ENCODE measurements at regions of chr3 and their contacts with region 1.

Region 1: GRCh38 chr3:179147873-179148615 is at the start of gene PIK3CA:
- DNase-seq: peak; percentile 96 to 97
- ATAC-seq: peak; percentile 98
- H3K4me3 ChIP-seq: peak within 1 kb of the TSS; percentile 94 to 100
- H3K27ac ChIP-seq: peak within 1 kb of the TSS; percentile 86 to 96
- H3K4me1 ChIP-seq: peaks cover 0 to 7% of the 10 kb centered on the region in 2 donors
- H3K27me3 ChIP-seq: no peaks in the 10 kb centered on the region
- total RNA-seq, gene PIK3CA: 37.6 to 39.1 TPM

Region 2: GRCh38 chr3:179015551-179016020 is 132.5 kb before region 1 on chr3:
- intact Hi-C with region 1: loop called in 1 of 2 experiments (anchors 5 kb)
- DNase-seq: no peak
- ATAC-seq: peak; percentile 92
- H3K4me3 ChIP-seq: no peak overlapping the region
- H3K27ac ChIP-seq: no peak overlapping the region
- H3K4me1 ChIP-seq: peaks cover 0 to 2% of the 10 kb centered on the region in 2 donors
- H3K27me3 ChIP-seq: no peaks in the 10 kb centered on the region

Region 3: DNA sequence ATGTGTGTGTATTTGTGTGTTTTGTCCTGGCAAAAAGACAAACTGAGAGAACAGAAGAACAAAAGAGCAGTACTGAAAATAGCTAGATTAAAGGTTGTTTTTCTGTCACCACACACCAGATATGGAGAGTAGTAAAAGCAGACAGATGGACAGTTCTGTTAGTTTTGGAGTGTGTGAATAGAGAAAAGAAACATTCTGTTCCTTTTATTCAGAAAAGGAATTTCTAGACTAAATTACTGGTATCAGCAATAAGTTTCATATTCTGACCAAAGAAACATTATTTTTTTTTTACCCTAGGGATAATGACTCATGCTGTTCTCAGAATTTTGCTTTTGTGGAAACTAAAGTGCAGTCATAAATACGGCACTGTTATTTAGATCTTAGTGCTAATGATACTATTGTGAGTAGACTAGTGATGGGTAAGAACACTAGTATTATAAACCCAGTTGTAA is 33.0 kb after region 1 on chr3:
- intact Hi-C with region 1: loop called in 1 of 2 experiments (anchors 5 kb)
- DNase-seq: no peak
- ATAC-seq: peak; percentile 90
- H3K4me3 ChIP-seq: no peak overlapping the region
- H3K27ac ChIP-seq: no peak overlapping the region
- H3K4me1 ChIP-seq: peaks cover 5 to 16% of the 10 kb centered on the region in 2 donors
- H3K27me3 ChIP-seq: no peaks in the 10 kb centered on the region

Region 4: DNA sequence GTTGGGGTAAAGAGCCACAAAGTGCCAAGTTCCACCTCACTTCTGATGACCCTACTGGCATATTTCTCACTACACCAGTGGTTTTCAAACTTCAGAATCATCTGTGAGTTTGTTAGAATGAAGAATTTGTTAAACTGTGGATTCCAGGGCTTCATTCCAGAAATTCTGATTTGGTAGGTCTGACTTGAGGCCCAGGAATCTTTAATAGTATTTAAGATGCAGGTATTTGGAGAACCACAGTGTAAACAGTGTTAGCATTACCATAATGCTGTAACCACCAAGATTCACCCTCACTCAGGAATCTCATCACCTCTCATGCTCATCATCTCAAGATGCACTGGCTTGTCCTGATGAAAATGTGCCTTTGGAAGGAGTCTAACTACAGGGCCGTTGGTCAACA is 96.8 kb after region 1 on chr3:
- intact Hi-C with region 1: no loop called
- DNase-seq: no peak
- ATAC-seq: no peak
- H3K4me3 ChIP-seq: no peak overlapping the region
- H3K27ac ChIP-seq: no peak overlapping the region
- H3K4me1 ChIP-seq: no peaks in the 10 kb centered on the region
- H3K27me3 ChIP-seq: no peaks in the 10 kb centered on the region

Region 5: DNA sequence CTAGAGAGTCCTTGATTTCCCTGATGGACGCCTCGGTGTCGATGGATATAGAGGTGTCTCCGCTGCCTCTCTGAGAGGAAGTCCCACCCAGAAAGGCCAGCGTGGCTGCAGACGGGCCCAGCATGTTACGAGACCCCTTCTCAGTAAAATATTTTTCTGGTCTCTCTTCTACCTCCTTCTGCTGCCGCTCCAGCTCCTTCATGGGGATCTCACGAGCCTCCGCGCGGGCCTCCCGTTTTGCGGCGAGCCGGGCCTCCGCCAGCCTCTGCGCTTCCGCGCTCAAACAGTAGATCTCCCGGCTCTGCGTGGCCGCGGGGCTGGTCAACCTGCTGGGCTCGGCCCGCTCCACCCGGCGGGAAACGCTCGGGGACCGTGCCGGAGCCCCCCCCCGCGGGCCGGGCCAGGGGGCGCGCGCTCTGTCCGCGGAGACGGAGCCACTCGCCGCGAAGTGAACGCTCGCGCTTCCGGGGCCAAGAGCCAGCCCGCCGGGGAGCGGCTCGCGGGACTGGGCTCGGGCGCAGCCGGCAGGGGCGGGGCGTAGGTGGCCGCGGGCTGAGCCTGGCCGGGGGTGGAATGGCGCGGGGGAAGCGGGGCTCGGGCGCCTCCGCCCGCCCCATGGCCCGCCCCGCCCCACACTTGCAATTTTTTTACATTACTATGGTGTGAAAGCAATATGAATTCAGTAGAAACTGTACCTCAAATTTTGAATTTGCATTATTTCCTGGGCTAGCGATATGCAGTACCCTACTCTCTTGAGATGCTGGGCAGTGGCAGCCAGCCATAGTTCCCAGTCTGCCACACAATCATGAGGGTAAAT is 113.1 kb after region 1 on chr3:
- intact Hi-C with region 1: loop called in 1 of 2 experiments (anchors 2 kb)
- DNase-seq: peak; percentile 84 to 93
- ATAC-seq: peak; percentile 95
- H3K4me3 ChIP-seq: peak overlapping the region; percentile 28 to 90
- H3K27ac ChIP-seq: no peak overlapping the region
- H3K4me1 ChIP-seq: no peaks in the 10 kb centered on the region
- H3K27me3 ChIP-seq: no peaks in the 10 kb centered on the region

Region 6: DNA sequence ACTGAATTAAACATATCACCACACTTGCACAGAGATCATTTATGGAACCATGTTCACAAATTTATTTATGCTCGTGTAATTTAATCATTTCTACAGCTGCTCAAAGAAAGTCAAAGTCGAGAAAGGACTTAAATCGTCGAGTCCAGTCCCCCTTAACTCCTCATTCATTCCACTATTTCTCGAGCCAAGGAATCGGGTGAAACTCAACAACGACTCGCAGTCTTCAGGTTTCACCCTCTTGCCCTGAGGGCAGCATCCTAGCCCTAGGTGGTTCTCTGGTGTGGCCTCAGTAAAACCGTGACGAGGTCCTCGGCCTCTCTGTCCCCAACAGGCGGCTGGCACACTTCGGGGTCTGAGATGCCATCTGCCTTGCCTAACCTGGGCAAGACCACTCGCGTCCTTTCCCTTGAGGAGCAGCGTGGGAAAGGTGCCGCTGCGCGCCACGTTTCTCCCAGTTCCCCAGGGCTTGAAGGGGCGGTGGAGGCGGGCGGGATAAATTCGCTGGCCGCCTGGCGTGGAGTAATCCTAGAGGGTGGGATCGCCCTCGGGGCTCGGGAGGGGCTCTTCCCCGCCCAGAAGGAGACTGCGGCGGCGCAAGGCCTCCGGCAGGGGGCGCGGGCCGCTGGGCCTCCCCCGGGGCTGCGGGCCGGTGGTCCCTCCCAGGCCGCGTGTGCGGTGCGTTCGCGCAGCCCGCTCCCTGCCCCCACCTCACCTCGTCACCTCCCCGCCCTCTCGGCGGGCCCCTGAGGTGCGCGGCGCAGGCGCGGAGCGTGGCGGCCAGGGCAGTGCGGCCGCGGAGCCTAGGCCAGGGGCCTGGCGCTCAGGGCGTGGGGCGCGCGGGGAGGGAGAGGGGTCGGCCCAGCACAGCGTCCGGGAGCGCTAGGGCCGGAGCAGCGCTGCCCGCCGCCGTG is 174.5 kb after region 1 on chr3 and contains the start of gene ZNF639:
- intact Hi-C with region 1: loop called (anchors 2 to 5 kb)
- DNase-seq: peak; percentile 87 to 94
- ATAC-seq: peak; percentile 94
- H3K4me3 ChIP-seq: peak within 1 kb of the TSS; percentile 30 to 74
- H3K27ac ChIP-seq: peak within 1 kb of the TSS; percentile 59 to 83
- H3K4me1 ChIP-seq: no peaks in the 10 kb centered on the region
- H3K27me3 ChIP-seq: no peaks in the 10 kb centered on the region
- total RNA-seq, gene ZNF639: 36.9 to 40.0 TPM